Activated CD4-positive, alpha-beta T cell treated with anti-CD3 and anti-CD28 coated beads, Interleukin-2, amount 10 ng/mL, durations not matched to agents 7 days and 5 days (primary cell): ENCODE measurements at regions of chr7 and their contacts with region 1.

Region 1: GRCh38 chr7:155598810-155599210 is 45.7 kb upstream of the RBM33 start:
- DNase-seq: peak; percentile 84
- H3K4me3 Mint-ChIP-seq: no peak overlapping the region
- H3K27ac Mint-ChIP-seq: no peak overlapping the region
- H3K4me1 Mint-ChIP-seq: peaks cover 8% of the 10 kb centered on the region
- H3K27me3 Mint-ChIP-seq: peaks cover 29% of the 10 kb centered on the region

Region 2: DNA sequence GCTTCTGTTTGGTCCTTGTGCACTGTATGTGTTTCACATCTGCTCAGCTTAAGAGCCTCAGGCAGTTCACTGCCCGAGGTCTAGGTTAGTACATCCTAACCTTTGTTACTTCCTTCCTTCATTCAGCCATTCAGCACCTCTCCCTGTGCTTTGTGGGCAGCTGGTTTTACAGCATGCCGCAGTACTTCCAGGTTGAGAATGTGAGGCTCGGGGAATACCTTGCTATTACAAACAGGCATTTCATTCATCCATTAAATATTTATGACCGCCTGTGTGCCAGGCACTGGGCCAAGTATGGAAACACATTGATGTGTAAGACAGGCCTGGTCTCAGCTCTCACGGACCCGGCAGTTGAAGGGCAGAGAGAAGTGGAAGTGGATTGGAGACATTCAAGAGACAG is 131.0 kb after region 1 on chr7:
- CTCF ChIA-PET with region 1: interaction called, 13 read pairs
- POLR2A ChIA-PET with region 1: no interaction called
- DNase-seq: no peak
- H3K4me3 Mint-ChIP-seq: no peak overlapping the region
- H3K27ac Mint-ChIP-seq: no peak overlapping the region
- H3K4me1 Mint-ChIP-seq: peaks cover 46% of the 10 kb centered on the region
- H3K27me3 Mint-ChIP-seq: no peaks in the 10 kb centered on the region

Region 3: DNA sequence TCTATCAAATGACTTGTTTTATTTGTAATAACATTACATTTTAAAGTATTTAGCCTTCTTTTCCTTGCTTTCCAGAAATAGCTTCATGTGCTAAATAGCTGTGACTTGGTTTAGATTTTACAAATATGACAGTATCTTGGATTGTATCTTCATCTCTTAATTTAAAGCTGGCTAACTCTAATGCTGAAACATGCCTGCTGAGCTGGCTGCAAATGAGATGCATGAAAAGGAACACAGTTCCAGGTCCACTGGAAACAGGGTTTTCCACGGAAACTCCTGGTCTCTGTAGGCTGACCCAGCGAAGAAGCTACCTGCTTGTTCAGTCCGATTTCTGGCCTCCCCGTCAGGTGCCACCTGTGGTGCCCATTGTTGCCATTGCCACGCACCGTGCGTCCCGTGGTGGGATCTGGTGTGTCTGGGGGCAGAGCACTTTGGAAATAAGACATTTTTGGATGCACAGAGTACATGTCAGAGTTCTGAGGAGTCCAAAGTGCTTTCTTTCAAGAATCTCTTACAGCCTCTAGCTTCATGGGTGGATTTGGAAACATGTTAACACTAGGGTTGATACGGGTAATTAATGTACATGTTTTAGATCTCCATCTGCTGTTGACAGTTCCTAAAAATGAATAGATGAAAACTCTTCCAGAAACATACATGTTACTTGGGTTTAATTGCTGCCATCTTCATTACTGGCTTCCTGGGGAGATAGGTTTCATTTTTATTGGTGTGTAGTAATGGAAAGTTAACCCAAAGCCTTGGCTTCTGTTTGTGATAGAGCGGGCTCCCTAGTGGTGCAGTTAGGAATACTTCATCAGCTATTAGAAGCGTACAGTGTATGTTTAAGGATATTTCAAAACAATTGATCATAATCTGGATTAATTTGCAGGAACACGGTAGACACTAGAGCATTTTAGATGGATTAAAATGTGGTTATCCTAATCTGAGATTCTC is 168.4 kb after region 1 on chr7:
- CTCF ChIA-PET with region 1: interaction called, 30 read pairs
- POLR2A ChIA-PET with region 1: no interaction called
- DNase-seq: no peak
- H3K4me3 Mint-ChIP-seq: no peak overlapping the region
- H3K27ac Mint-ChIP-seq: no peak overlapping the region
- H3K4me1 Mint-ChIP-seq: peaks cover 51% of the 10 kb centered on the region
- H3K27me3 Mint-ChIP-seq: no peaks in the 10 kb centered on the region